ENCODE measurements at regions of chr2 and their contacts with region 1.

Region 1: GRCh38 chr2:227655454-227655853 is 11.2 kb upstream of the SCYGR5 start:
- DNase-seq: no peak
- ATAC-seq: peak; percentile 55
- H3K4me3 Mint-ChIP-seq: no peak overlapping the region
- H3K27ac Mint-ChIP-seq: no peak overlapping the region
- H3K4me1 Mint-ChIP-seq: no peaks in the 10 kb centered on the region
- H3K27me3 Mint-ChIP-seq: peaks cover 6% of the 10 kb centered on the region
- CTCF ChIP-seq: no peak

Region 2: DNA sequence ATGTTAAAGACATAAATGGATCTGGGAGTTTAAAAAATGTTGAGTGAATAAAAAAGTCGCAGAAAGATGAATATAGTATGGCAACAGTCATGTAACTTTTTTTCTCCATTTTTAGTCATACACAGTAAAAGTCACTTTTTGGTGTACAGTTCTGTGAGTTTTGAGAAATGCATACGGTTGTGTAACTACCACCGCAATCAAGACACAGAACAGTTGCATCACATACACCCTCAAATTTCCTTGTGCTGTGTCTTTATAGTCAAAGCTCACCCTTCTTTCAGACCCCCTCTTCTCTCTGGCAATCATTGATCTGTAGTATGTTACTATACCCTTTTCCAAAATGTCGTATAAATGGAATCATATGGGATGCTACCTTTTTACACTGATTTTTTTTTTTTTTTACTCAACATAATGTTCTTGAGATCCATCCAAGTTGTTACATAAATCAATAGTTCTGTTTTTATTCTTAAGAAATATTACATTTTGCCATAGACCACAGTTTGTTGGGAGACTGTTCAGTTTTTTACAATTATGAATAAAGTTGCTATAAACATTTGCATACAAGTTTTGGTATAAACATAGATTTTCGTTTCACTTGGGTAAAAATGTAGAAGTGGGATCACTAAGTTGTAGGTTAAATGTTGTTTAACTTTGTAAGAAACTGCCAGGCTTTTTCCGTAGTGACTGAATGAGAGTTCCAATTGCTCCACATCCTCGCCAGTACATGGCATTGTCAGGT is 218.8 kb before region 1 on chr2:
- CTCF ChIA-PET with region 1: no interaction called
- POLR2A ChIA-PET with region 1: no interaction called
- intact Hi-C with region 1: no loop called
- DNase-seq: no peak
- ATAC-seq: no peak
- H3K4me3 Mint-ChIP-seq: no peak overlapping the region
- H3K27ac Mint-ChIP-seq: no peak overlapping the region
- H3K4me1 Mint-ChIP-seq: peaks cover 2% of the 10 kb centered on the region
- H3K27me3 Mint-ChIP-seq: no peaks in the 10 kb centered on the region
- CTCF ChIP-seq: no peak

Region 3: GRCh38 chr2:227862227-227862740 is 206.8 kb after region 1 on chr2:
- CTCF ChIA-PET with region 1: interaction called, 13 read pairs
- POLR2A ChIA-PET with region 1: no interaction called
- intact Hi-C with region 1: loop called (anchors 5 kb)
- DNase-seq: peak; percentile 62
- ATAC-seq: peak; percentile 51
- H3K4me3 Mint-ChIP-seq: no peak overlapping the region
- H3K27ac Mint-ChIP-seq: no peak overlapping the region
- H3K4me1 Mint-ChIP-seq: no peaks in the 10 kb centered on the region
- H3K27me3 Mint-ChIP-seq: peaks cover 5% of the 10 kb centered on the region
- CTCF ChIP-seq: peak; percentile 78

Region 4: DNA sequence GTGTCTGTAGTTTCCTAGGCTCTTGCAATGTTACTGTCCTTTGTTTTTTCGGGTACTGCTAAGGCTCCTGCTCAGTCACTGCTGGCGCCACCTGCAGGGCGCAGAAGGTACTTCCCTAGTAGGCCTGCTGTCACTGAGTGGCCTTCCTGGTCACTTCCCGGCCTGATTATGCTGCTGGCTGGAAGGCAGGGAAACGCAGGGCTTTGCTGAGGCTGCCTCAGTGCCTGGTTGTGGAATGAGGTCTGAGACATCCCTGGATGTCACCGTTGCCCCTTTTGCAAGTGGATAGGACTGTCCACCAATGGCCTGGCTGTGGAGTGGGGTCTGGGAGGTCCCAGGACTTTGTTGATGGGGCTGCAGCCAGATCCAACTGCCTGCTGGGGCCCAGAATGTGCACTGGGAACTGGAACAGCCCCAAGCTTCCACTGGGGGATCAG is 229.1 kb after region 1 on chr2:
- CTCF ChIA-PET with region 1: interaction called, 8 read pairs
- POLR2A ChIA-PET with region 1: no interaction called
- intact Hi-C with region 1: loop called (anchors 5 kb)
- DNase-seq: peak; percentile 76
- ATAC-seq: peak; percentile 79
- H3K4me3 Mint-ChIP-seq: no peak overlapping the region
- H3K27ac Mint-ChIP-seq: no peak overlapping the region
- H3K4me1 Mint-ChIP-seq: no peaks in the 10 kb centered on the region
- H3K27me3 Mint-ChIP-seq: peaks cover 6% of the 10 kb centered on the region
- CTCF ChIP-seq: peak; percentile 76